ENCODE measurements at regions of chr9 and their contacts with region 1.

Region 1: DNA sequence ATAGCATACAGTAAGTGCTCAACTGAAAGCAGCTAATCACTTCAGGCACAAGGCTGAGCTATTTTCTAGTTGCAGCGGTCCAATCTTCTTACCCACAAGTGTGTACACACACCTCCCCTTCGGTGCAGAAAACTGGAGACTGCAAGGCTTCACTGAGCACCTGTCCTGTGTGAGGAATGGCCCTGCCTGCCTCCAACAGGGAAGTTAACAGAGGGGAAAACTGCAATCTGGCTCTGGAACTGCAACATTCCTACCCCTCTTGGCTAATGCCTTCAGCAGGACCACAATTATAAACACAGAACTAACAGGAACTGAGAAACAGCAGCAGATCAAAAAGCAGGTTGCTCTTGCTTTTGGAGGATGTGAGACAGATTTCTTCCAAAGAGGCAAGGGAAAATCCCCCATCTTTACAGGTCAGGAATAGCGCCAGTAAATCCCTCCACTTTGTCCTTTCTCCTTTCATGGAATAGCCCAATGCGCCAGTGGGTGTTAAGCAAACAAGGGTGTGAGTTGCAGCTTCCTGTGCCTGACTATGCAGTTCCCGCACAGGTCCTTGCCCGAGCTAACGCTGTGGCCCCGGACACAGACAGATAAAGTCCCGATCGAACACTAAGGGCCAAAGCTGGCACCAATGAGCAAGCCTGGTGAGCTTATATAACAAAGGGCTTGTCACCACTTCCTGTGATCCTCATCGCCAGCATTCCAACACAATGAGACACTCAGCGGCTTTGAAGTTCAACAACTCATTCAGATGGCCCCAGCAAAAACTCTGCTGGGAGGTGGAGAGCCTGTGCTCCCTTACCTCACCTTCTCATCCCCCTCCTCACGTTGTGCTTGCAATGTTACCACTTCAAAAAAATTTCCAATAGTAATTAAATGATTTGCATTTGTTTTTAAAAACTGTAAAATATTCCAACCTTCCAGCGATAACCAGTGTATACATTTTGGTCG is 21.5 kb downstream of the SHB start:
- ATAC-seq: peak; percentile 52 to 91 (median 76)
- H3K4me3 ChIP-seq: peak overlapping the region in 1 of 5 donors; percentile 3
- H3K27ac ChIP-seq: no peak overlapping the region
- H3K4me1 ChIP-seq: peaks cover 4 to 11% of the 10 kb centered on the region in 2 donors

Region 2: DNA sequence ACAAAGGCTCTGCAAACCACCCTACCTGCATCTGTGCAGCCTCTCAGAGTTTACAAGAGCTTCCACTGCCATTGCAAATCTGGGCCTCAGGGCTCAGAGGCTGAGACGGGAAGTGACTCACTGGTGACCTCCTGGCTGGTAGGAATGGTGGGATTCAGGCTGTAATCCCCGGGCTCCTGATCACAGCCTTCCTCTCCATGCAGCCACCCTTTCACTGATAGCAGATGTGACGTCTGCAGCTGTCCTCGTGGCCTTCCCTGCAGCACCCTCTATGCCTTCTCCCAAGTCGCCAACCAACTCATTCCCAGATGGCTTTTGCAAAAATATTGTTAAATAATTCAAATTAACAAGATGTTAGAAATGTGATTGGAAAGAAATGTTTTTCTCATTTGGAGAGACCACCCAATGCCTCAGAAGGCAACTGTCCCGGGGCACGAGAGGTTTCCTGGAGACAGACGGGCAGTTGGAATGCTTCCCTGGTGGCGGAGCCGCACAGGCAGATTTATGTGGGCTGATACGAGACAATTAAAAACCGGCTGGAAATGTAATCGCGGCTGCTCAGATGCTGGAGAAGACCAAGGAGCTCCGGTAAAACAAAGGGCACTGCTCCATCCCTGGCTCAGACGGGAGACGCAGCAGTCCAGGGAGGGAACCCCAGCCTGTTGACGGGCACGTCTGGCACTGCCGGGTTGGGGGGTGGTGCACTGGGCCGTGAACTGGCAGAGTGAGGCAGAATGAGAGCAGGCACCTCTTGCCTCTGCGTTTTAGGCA is 109.3 kb before region 1 on chr9:
- in situ Hi-C with region 1: loop called in 1 of 9 experiments (anchors 25 kb)
- ATAC-seq: peak; percentile 44 to 81 (median 73)
- H3K4me3 ChIP-seq: no peak overlapping the region
- H3K27ac ChIP-seq: peak overlapping the region; percentile 52 to 81
- H3K4me1 ChIP-seq: peaks cover 52 to 55% of the 10 kb centered on the region in 2 donors

Region 3: GRCh38 chr9:38141746-38142591 is 94.4 kb after region 1 on chr9:
- in situ Hi-C with region 1: loop called in 1 of 9 experiments (anchors 25 kb)
- ATAC-seq: peak; percentile 16 to 96 (median 84)
- H3K4me3 ChIP-seq: no peak overlapping the region
- H3K27ac ChIP-seq: no peak overlapping the region
- H3K4me1 ChIP-seq: peaks cover 0 to 10% of the 10 kb centered on the region in 2 donors

Region 4: DNA sequence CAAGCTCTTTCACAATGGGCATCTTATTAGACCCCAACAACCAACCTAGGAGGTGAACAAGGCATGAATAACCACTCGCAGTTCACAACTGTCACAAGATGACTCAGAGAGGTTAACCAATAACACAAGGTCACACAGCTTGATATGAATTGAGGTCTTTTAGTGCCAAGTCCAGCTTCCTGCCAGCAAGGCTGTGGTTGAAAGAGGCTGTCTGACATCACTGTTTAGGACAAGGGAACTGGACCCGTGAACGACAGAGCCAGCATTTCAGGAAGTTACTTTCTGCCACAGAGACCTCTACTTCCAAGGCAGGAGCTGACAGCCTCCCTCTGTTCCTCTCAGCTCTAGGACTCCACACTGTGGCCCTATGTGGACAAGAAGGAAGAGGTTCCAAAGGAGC is 291.5 kb after region 1 on chr9:
- in situ Hi-C with region 1: loop called in 2 of 9 experiments (anchors 25 kb)
- ATAC-seq: peak in 1 of 8 experiments; percentile 38
- H3K4me3 ChIP-seq: no peak overlapping the region
- H3K27ac ChIP-seq: no peak overlapping the region
- H3K4me1 ChIP-seq: peaks cover 7 to 27% of the 10 kb centered on the region in 2 donors